Ascending aorta (tissue), 2 donors: ENCODE measurements at regions of chr15 and their contacts with region 1.

Region 1: DNA sequence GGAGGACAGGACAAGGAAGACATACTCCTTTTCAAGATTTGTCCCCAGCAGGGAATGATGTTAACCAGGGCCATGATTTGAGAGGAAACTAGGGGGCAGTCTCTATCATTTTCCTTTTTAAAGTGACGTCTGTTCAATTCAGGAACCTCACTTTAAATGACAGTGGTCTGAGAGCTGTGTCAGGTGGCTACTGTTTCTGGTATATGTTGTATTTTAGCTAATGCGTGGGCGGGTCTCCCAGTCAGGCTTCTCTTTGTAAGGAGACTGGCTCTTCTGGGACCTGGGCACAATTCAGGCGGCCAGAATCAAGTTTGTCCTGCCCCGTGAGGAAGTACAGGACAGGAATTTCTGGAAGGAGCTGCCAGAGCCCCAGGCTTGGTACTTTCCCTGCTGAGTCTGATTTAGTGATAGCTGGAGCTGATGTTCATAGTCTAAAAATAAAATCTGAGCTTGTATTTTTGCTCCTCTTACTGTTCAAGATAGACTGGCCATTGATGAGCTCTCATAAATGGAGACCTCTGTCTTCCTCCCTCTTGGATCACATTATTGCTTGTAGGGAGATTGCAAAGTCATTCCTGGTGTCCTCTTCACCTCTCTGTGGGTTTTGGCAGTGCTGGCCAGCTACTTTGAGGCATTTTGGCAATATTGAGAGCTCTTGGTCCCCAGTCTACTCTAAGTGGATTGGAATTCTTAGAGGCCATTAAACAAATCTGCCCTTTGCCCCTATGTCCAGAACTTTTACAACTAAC is 25.6 kb downstream of the SQOR start:
- DNase-seq: peak in 1 of 2 donors; percentile 74
- H3K4me3 ChIP-seq: peak overlapping the region in 1 of 2 donors; percentile 9
- H3K27ac ChIP-seq: peak overlapping the region; percentile 82 to 90
- H3K4me1 ChIP-seq: peaks cover 10 to 31% of the 10 kb centered on the region in 2 donors
- H3K27me3 ChIP-seq: no peaks in the 10 kb centered on the region
- CTCF ChIP-seq: peak in 2 of 3 experiments; percentile 9 to 12

Region 2: DNA sequence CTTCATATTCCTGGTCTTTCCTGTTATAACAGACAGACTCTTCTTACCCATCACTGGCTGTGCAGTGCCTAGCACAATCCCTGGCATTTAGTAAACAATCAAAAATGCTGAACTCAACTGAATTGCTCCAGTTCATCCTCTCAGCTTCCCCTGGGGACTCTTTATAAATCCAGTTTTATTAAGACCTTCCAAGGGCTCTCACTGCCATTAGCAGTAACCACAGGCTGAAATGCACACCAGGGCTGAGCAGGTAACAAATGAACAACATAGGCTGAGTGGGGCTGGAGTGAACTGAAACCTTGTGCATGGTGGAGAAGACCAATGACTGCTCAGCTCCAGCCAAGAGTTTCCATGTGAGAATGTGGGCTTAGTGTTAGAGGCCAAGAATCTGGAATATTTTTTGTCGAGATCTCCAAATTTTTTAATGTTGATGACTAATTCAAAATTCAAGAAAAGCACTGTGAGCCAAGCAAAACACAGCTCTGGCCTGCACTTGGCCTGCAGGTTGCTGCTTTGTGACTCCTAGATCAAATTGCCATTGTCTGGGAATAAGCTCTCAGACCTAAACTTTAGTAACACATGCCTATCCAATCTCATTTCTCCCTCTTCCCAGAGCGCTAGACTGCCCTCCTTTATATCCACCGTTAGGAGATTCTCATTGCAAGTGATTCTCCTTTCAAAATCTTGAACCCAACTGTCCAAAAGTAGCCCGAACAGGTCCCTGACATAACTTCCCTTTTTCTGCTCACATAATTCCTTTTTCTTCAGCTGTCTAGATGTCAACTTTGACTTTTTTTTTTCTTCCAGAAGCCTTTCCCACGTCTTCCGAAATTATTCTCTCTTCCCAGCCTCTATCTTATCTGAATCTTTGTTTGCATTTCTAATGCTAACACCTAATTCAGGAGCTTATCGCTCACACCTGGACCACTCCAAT is 18.1 kb before region 1 on chr15:
- intact Hi-C with region 1: loop called (anchors 2 kb)
- DNase-seq: peak in 1 of 2 donors; percentile 78
- H3K4me3 ChIP-seq: no peak overlapping the region
- H3K27ac ChIP-seq: peak overlapping the region; percentile 58 to 68
- H3K4me1 ChIP-seq: peaks cover 15 to 60% of the 10 kb centered on the region in 2 donors
- H3K27me3 ChIP-seq: no peaks in the 10 kb centered on the region
- CTCF ChIP-seq: no peak